AG04449 (cell line): ENCODE measurements at regions of chr17 and their contacts with region 1.

Region 1: DNA sequence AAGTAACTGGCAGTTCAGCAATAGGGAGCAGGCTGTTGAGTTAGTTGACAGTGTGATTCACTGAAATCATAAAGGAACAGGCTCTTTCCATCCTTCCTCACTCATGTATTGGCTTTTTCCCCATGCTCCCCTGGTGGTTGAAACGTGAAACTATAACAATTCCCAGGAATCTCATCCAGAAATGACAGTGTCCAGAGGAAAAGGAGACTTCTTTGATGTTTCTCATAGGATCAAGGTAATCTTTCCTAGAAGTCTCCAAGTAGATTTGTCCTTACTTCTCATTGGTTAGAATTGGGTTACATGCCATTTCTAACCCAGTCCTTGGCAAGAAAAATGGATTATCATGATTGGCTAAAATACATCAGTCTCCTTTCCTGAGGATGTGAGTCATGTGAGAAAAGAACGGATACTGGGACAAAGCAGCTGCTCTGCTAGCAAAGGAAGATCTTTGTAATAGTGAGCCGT is 14.4 kb downstream of the TTC19 start:
- DNase-seq: peak; percentile 23
- H3K4me3 ChIP-seq: no peak overlapping the region
- CTCF ChIP-seq: peak; percentile 53

Region 2: GRCh38 chr17:15999439-16000350 is 14.3 kb before region 1 on chr17 and contains the starts of genes TTC19 and ZSWIM7:
- CTCF ChIA-PET with region 1: interaction called, 19 read pairs
- POLR2A ChIA-PET with region 1: no interaction called
- DNase-seq: peak; percentile 53
- H3K4me3 ChIP-seq: peak within 1 kb of the TSS; percentile 85
- CTCF ChIP-seq: no peak

Region 3: GRCh38 chr17:16025202-16025601 is 11.2 kb after region 1 on chr17:
- CTCF ChIA-PET with region 1: interaction called, 19 read pairs
- POLR2A ChIA-PET with region 1: interaction called, 3 read pairs
- DNase-seq: no peak
- H3K4me3 ChIP-seq: no peak overlapping the region
- CTCF ChIP-seq: no peak

Region 4: GRCh38 chr17:16158714-16159113 is 144.7 kb after region 1 on chr17:
- CTCF ChIA-PET with region 1: no interaction called
- POLR2A ChIA-PET with region 1: no interaction called
- DNase-seq: no peak
- H3K4me3 ChIP-seq: no peak overlapping the region
- CTCF ChIP-seq: no peak